IMR-90 (cell line): ENCODE measurements at regions of chr19 and their contacts with region 1.

Region 1: DNA sequence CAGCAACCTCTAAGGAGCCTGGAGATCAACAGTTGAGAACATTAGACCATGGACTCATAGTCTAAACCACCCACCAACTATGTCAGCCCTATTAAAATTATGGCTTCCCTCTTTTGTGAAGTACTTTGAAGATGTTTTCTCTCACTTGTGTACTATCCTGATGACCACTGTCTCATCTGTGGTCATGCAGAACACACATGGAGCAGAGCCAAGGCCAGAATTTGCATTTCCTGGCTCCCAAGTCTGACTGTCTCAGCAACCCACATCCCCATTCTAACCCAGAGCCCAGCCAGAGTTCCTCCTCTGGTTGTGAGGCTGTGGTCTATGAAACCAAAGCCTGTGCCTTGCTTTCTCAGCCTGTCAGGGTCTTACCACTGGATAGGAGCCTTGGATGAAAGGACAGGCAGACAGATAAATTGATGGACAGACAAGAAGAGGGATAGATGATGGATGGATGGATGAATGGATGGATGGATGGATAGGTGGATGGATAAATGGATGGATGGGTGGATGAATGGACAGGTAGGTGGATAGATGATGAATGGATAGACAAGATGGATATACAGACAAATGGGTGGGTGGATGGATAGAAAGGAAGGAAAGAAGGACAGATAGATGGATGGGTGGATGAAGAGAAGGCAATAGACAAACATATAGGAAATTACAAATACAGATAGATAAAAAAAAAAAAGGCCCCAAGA is 35.4 kb downstream of the ZNF557 start:
- DNase-seq: no peak
- ATAC-seq: no peak
- H3K4me3 ChIP-seq: no peak overlapping the region
- H3K27ac ChIP-seq: no peak overlapping the region
- H3K4me1 ChIP-seq: no peaks in the 10 kb centered on the region
- H3K27me3 ChIP-seq: peaks cover 2% of the 10 kb centered on the region; the same call in 1 of the 2 replicates
- CTCF ChIP-seq: no peak
- POLR2A ChIP-seq: no peak
- RAD21 ChIP-seq: no peak

Region 2: GRCh38 chr19:7197760-7198696 is 93.1 kb after region 1 on chr19:
- CTCF ChIA-PET with region 1: no interaction called
- POLR2A ChIA-PET with region 1: no interaction called
- dilution Hi-C with region 1: no loop called
- in situ Hi-C with region 1: no loop called
- intact Hi-C with region 1: loop called (anchors 2 kb)
- DNase-seq: peak; percentile 94
- ATAC-seq: peak; percentile 94
- H3K4me3 ChIP-seq: peak overlapping the region; percentile 85
- H3K27ac ChIP-seq: peak overlapping the region; percentile 78
- H3K4me1 ChIP-seq: no peaks in the 10 kb centered on the region
- H3K27me3 ChIP-seq: no peaks in the 10 kb centered on the region
- CTCF ChIP-seq: 0 out of 2 replicates have a peak, but pooled peaks have one; percentile 0
- POLR2A ChIP-seq: peak; percentile 54; the same call in 1 of the 2 replicates
- RAD21 ChIP-seq: no peak

Region 3: GRCh38 chr19:7340959-7341837 is 236.3 kb after region 1 on chr19:
- CTCF ChIA-PET with region 1: interaction called, 12 read pairs
- POLR2A ChIA-PET with region 1: no interaction called
- dilution Hi-C with region 1: no loop called
- in situ Hi-C with region 1: loop called (anchors 5 kb)
- intact Hi-C with region 1: loop called (anchors 1 kb)
- DNase-seq: peak; percentile 64
- ATAC-seq: peak; percentile 95
- H3K4me3 ChIP-seq: no peak overlapping the region
- H3K27ac ChIP-seq: no peak overlapping the region
- H3K4me1 ChIP-seq: no peaks in the 10 kb centered on the region
- H3K27me3 ChIP-seq: peaks cover 6% of the 10 kb centered on the region; the same call in 1 of the 2 replicates
- CTCF ChIP-seq: peak; percentile 97
- POLR2A ChIP-seq: peak; percentile 48; the same call in 1 of the 2 replicates
- RAD21 ChIP-seq: peak; percentile 98

Region 4: GRCh38 chr19:7376151-7376852 is 271.4 kb after region 1 on chr19:
- CTCF ChIA-PET with region 1: no interaction called
- POLR2A ChIA-PET with region 1: no interaction called
- dilution Hi-C with region 1: no loop called
- in situ Hi-C with region 1: no loop called
- intact Hi-C with region 1: loop called (anchors 2 kb)
- DNase-seq: no peak
- ATAC-seq: no peak
- H3K4me3 ChIP-seq: no peak overlapping the region
- H3K27ac ChIP-seq: no peak overlapping the region
- H3K4me1 ChIP-seq: no peaks in the 10 kb centered on the region
- H3K27me3 ChIP-seq: no peaks in the 10 kb centered on the region; the same call in 1 of the 2 replicates
- CTCF ChIP-seq: no peak
- POLR2A ChIP-seq: no peak
- RAD21 ChIP-seq: no peak